Activated CD4-positive, alpha-beta T cell treated with anti-CD3 and anti-CD28 coated beads for 36 hours (primary cell): ENCODE measurements at regions of chr10 and their contacts with region 1.

Region 1: GRCh38 chr10:6050801-6051445 is 11.2 kb downstream of the IL2RA start:
- DNase-seq: peak; percentile 96
- ATAC-seq: peak; percentile 37
- H3K4me3 Mint-ChIP-seq: peak overlapping the region; percentile 81
- H3K27ac Mint-ChIP-seq: peak overlapping the region; percentile 96
- H3K4me1 Mint-ChIP-seq: peaks cover 85% of the 10 kb centered on the region
- H3K27me3 Mint-ChIP-seq: no peaks in the 10 kb centered on the region

Region 2: GRCh38 chr10:5684318-5684970 is 366.5 kb before region 1 on chr10 and contains the start of gene TASOR2:
- CTCF ChIA-PET with region 1: no interaction called
- POLR2A ChIA-PET with region 1: no interaction called
- intact Hi-C with region 1: loop called in 1 of 2 experiments (anchors 2 kb)
- DNase-seq: peak; percentile 98
- ATAC-seq: peak; percentile 91
- H3K4me3 Mint-ChIP-seq: peak within 1 kb of the TSS; percentile 96
- H3K27ac Mint-ChIP-seq: peak within 1 kb of the TSS; percentile 92
- H3K4me1 Mint-ChIP-seq: peaks cover 56% of the 10 kb centered on the region
- H3K27me3 Mint-ChIP-seq: no peaks in the 10 kb centered on the region
- total RNA-seq, gene TASOR2: 41.9 to 45.4 TPM

Region 3: GRCh38 chr10:6014241-6014761 is 36.6 kb before region 1 on chr10:
- CTCF ChIA-PET with region 1: interaction called, 5 read pairs
- POLR2A ChIA-PET with region 1: no interaction called
- intact Hi-C with region 1: loop called (anchors 2 kb)
- DNase-seq: peak; percentile 79
- ATAC-seq: peak; percentile 76
- H3K4me3 Mint-ChIP-seq: peak overlapping the region; percentile 14
- H3K27ac Mint-ChIP-seq: peak overlapping the region; percentile 87
- H3K4me1 Mint-ChIP-seq: peaks cover 67% of the 10 kb centered on the region
- H3K27me3 Mint-ChIP-seq: no peaks in the 10 kb centered on the region

Region 4: GRCh38 chr10:6068422-6068821 is 17.5 kb after region 1 on chr10:
- CTCF ChIA-PET with region 1: interaction called, 20 read pairs
- POLR2A ChIA-PET with region 1: interaction called, 12 read pairs
- intact Hi-C with region 1: loop called (anchors 1 kb)
- DNase-seq: peak; percentile 64
- ATAC-seq: peak; percentile 23
- H3K4me3 Mint-ChIP-seq: peak overlapping the region; percentile 65
- H3K27ac Mint-ChIP-seq: peak overlapping the region; percentile 95
- H3K4me1 Mint-ChIP-seq: peaks cover 90% of the 10 kb centered on the region
- H3K27me3 Mint-ChIP-seq: peaks cover 3% of the 10 kb centered on the region

Region 5: GRCh38 chr10:6136215-6137201 is 85.6 kb after region 1 on chr10:
- CTCF ChIA-PET with region 1: interaction called, 4 read pairs
- POLR2A ChIA-PET with region 1: interaction called, 3 read pairs
- intact Hi-C with region 1: loop called (anchors 1 to 5 kb)
- DNase-seq: peak; percentile 83
- ATAC-seq: peak; percentile 81
- H3K4me3 Mint-ChIP-seq: peak overlapping the region; percentile 61
- H3K27ac Mint-ChIP-seq: peak overlapping the region; percentile 89
- H3K4me1 Mint-ChIP-seq: peaks cover 71% of the 10 kb centered on the region
- H3K27me3 Mint-ChIP-seq: peaks cover 6% of the 10 kb centered on the region

Region 6: GRCh38 chr10:6239213-6239991 is 188.5 kb after region 1 on chr10:
- CTCF ChIA-PET with region 1: no interaction called
- POLR2A ChIA-PET with region 1: no interaction called
- intact Hi-C with region 1: no loop called
- DNase-seq: peak; percentile 84
- ATAC-seq: peak; percentile 92
- H3K4me3 Mint-ChIP-seq: no peak overlapping the region
- H3K27ac Mint-ChIP-seq: peak overlapping the region; percentile 45
- H3K4me1 Mint-ChIP-seq: peaks cover 23% of the 10 kb centered on the region
- H3K27me3 Mint-ChIP-seq: no peaks in the 10 kb centered on the region

Region 7: DNA sequence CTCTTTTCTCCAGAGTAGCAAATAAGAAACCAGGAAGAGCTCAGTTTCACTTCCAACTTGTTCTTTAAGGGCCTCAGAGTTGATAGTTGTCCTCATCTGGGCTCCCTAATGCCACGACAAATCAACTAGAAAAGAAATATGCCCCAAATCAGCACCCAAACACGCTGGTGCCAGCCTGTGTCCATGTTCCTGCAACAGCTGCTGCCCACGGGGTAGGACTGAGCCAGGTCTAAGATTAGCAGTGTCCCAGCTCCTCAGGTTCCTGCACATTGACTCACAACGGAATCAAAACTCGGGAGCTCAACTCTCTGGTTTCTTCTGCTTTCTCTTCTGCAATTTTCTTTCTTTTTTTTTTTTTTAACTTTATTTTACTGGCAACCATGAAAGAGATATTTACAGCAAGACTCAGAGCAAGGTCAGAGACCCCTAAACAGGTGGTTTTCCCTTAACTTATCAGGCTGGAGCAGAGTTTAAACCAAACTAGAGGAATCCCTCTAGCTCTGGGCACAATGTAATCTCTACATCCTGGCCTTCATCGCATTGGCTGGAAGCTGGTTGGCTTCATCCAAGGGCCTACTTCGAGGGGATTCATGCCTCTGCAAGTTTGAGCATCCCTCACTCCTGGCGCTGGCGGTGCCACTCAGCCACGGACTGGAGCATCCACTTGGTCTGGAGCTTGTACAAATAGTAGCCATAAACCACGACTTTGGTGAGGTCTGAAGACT is 277.9 kb after region 1 on chr10:
- CTCF ChIA-PET with region 1: no interaction called
- POLR2A ChIA-PET with region 1: no interaction called
- intact Hi-C with region 1: no loop called
- DNase-seq: no peak
- ATAC-seq: no peak
- H3K4me3 Mint-ChIP-seq: no peak overlapping the region
- H3K27ac Mint-ChIP-seq: no peak overlapping the region
- H3K4me1 Mint-ChIP-seq: no peaks in the 10 kb centered on the region
- H3K27me3 Mint-ChIP-seq: no peaks in the 10 kb centered on the region

Region 8: GRCh38 chr10:6348096-6348874 is 297.4 kb after region 1 on chr10:
- CTCF ChIA-PET with region 1: interaction called, 3 read pairs
- POLR2A ChIA-PET with region 1: interaction called, 7 read pairs
- intact Hi-C with region 1: loop called in 1 of 2 experiments (anchors 10 kb)
- DNase-seq: peak; percentile 94
- ATAC-seq: peak; percentile 91
- H3K4me3 Mint-ChIP-seq: peak overlapping the region; percentile 65
- H3K27ac Mint-ChIP-seq: peak overlapping the region; percentile 98
- H3K4me1 Mint-ChIP-seq: peaks cover 62% of the 10 kb centered on the region
- H3K27me3 Mint-ChIP-seq: no peaks in the 10 kb centered on the region